ENCODE measurements at regions of chr10 and their contacts with region 1.

Region 1: GRCh38 chr10:97752956-97753355 is 16.0 kb downstream of the ZFYVE27 start:
- DNase-seq: no peak
- ATAC-seq: no peak
- H3K4me3 ChIP-seq: no peak overlapping the region
- H3K27ac ChIP-seq: no peak overlapping the region
- H3K4me1 ChIP-seq: no peaks in the 10 kb centered on the region
- CTCF ChIP-seq: no peak
- EP300 ChIP-seq: no peak
- POLR2A ChIP-seq: no peak
- RAD21 ChIP-seq: no peak

Region 2: GRCh38 chr10:97731346-97732051 is 21.5 kb before region 1 on chr10:
- CTCF ChIA-PET with region 1: interaction called, 11 read pairs
- POLR2A ChIA-PET with region 1: interaction called, 5 read pairs
- DNase-seq: peak; percentile 60 to 81
- ATAC-seq: peak; percentile 86 to 89
- H3K4me3 ChIP-seq: no peak overlapping the region
- H3K27ac ChIP-seq: peak overlapping the region in 1 of 2 experiments; percentile 26; a peak in 2 of 6 replicates
- H3K4me1 ChIP-seq: peaks cover 7% of the 10 kb centered on the region; the same call in 1 of the 3 replicates
- CTCF ChIP-seq: peak; percentile 97
- EP300 ChIP-seq: no peak
- POLR2A ChIP-seq: no peak
- RAD21 ChIP-seq: peak; percentile 97 to 98

Measured in A549 (cell line).